K562 (cell line): ENCODE measurements at regions of chr1 and their contacts with region 1.

Region 1: DNA sequence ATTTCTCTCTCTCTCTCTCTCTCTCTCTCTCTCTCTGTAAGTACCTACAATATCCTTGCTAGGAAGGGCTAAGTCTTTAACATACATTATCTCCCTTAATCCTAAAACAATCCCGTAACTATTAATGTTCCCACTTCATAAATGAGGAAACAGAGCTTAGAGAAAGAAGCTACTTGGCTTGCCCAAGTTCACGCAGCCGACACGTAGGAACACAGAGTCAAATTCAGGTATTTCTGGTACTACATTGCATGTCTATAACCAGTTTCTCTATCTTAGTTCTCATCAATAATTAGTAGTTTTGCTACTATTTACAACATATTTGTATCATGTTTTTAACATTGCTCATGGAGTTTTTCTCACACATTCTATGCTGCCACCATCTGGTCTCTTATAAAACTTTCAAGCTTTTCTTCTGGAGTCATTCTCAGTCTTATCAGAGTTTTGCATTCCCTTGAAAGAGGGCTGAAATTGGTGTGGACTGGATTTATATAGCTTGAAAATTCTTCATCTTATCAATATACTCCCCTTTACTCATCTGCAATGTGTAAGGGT is 118.9 kb upstream of the PALMD start:
- DNase-seq: peak; percentile 14 to 36 (median 20)
- ATAC-seq: peak; percentile 84
- H3K4me3 ChIP-seq: no peak overlapping the region
- H3K27ac ChIP-seq: no peak overlapping the region
- H3K4me1 ChIP-seq: no peaks in the 10 kb centered on the region; a peak in 1 of 5 replicates
- H3K27me3 ChIP-seq: no peaks in the 10 kb centered on the region
- CTCF ChIP-seq: peak in 2 of 3 experiments; percentile 27 to 67; a peak in 2 of 6 replicates
- EP300 ChIP-seq: no peak
- POLR2A ChIP-seq: no peak
- RAD21 ChIP-seq: peak; percentile 64 to 71

Region 2: GRCh38 chr1:99384021-99384420 is 143.0 kb before region 1 on chr1:
- CTCF ChIA-PET with region 1: no interaction called
- POLR2A ChIA-PET with region 1: no interaction called
- in situ Hi-C with region 1: no loop called
- intact Hi-C with region 1: no loop called
- DNase-seq: no peak
- ATAC-seq: no peak
- H3K4me3 ChIP-seq: no peak overlapping the region
- H3K27ac ChIP-seq: no peak overlapping the region
- H3K4me1 ChIP-seq: no peaks in the 10 kb centered on the region
- H3K27me3 ChIP-seq: no peaks in the 10 kb centered on the region; a peak in 1 of 5 replicates
- CTCF ChIP-seq: no peak
- EP300 ChIP-seq: no peak
- POLR2A ChIP-seq: no peak
- RAD21 ChIP-seq: no peak

Region 3: DNA sequence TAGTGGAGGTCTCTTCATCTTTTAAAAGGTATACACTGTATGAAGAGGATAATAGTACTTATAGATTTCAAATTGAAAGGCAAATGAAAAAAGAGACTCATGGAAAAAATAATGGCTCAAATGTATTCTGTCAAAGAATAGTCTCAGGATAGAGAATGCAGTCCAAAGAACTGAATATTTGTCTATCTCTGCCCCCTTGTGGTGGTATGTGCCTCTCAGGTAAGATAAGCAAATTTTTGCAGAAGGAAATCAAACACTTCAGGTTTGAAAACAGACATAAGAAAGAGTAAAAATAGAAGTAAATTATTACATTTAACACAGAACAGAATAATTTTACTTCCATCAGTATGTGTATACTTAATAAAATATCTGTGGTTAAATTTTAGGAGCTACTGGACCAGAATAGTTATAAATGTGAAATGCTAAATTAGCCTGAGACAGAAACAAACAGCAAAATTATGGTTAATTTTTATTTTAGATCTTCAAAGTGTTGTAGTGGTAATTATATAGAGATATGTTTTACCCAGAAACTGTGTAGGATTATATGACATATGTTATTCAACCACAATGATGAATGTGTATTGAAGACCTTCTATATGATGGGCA is 45.5 kb before region 1 on chr1:
- CTCF ChIA-PET with region 1: no interaction called
- POLR2A ChIA-PET with region 1: no interaction called
- in situ Hi-C with region 1: no loop called
- intact Hi-C with region 1: loop called (anchors 5 kb)
- DNase-seq: peak; percentile 35 to 69 (median 38)
- ATAC-seq: peak; percentile 89
- H3K4me3 ChIP-seq: no peak overlapping the region
- H3K27ac ChIP-seq: no peak overlapping the region
- H3K4me1 ChIP-seq: no peaks in the 10 kb centered on the region
- H3K27me3 ChIP-seq: no peaks in the 10 kb centered on the region
- CTCF ChIP-seq: peak; percentile 48 to 79 (median 50); a peak in 4 of 6 replicates
- EP300 ChIP-seq: no peak
- POLR2A ChIP-seq: no peak
- RAD21 ChIP-seq: peak; percentile 89

Region 4: GRCh38 chr1:99621340-99621901 is 94.4 kb after region 1 on chr1:
- CTCF ChIA-PET with region 1: no interaction called
- POLR2A ChIA-PET with region 1: no interaction called
- in situ Hi-C with region 1: no loop called
- intact Hi-C with region 1: no loop called
- DNase-seq: no peak
- ATAC-seq: no peak; the same call in 2 of the 3 replicates
- H3K4me3 ChIP-seq: no peak overlapping the region
- H3K27ac ChIP-seq: no peak overlapping the region
- H3K4me1 ChIP-seq: no peaks in the 10 kb centered on the region
- H3K27me3 ChIP-seq: no peaks in the 10 kb centered on the region
- CTCF ChIP-seq: no peak
- EP300 ChIP-seq: no peak
- POLR2A ChIP-seq: no peak
- RAD21 ChIP-seq: no peak

Region 5: DNA sequence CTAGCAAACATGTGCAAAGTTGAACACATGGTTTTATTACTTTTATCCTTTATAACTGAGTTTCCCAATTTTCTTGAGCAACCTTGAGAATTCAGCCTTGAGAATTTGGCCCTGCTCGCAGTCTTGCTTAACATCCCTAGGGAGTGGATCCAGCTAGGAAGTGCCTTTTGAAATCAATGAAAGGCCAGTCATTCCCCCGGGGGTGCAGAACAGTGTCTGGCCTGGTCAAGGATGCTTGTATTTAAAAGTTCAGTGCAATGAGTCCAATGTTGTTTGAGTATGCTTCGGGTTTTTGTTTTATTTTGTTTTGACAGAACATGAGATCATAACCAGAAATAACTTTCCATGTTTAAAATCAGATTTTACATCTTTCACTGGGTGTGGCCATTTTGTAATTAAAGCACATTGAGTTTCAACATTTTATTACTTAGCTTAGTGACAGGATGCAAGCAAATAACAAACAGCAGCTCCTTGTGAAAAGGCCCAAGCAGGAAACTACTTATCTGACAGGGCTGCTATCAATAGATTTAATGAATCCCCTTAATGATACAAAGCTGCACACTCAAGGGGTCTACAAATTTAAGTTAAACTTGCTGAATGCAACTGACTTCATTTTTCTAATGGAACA is 135.7 kb after region 1 on chr1:
- CTCF ChIA-PET with region 1: no interaction called
- POLR2A ChIA-PET with region 1: no interaction called
- in situ Hi-C with region 1: no loop called
- intact Hi-C with region 1: no loop called
- DNase-seq: no peak
- ATAC-seq: no peak
- H3K4me3 ChIP-seq: no peak overlapping the region
- H3K27ac ChIP-seq: no peak overlapping the region
- H3K4me1 ChIP-seq: no peaks in the 10 kb centered on the region
- H3K27me3 ChIP-seq: no peaks in the 10 kb centered on the region
- CTCF ChIP-seq: no peak
- EP300 ChIP-seq: no peak
- POLR2A ChIP-seq: no peak
- RAD21 ChIP-seq: no peak